GM13977 (cell line): ENCODE measurements at regions of chr1 and their contacts with region 1.

Region 1: DNA sequence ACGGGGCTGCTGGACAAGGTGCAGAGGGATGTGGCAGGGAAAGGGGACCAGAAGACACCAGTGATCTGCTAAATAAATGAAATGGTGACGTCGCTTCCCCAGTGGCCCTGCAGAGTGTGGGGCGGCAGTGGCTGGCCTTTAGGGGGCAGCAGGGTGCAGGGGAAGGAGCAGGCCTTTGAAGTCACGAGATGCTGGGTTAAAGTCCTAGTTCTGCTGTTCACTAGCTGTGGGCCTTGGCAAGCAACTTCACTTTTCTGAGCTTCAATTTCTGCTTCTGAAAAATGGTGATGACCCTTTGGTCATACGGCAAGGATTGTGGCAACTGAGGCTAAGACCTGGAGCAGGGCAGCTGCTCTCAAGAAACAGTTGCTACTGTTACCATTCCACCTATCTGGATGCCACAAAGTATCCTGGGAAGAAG is 9.2 kb upstream of the GALE start:
- DNase-seq: peak; percentile 84
- CTCF ChIP-seq: peak; percentile 98

Region 2: DNA sequence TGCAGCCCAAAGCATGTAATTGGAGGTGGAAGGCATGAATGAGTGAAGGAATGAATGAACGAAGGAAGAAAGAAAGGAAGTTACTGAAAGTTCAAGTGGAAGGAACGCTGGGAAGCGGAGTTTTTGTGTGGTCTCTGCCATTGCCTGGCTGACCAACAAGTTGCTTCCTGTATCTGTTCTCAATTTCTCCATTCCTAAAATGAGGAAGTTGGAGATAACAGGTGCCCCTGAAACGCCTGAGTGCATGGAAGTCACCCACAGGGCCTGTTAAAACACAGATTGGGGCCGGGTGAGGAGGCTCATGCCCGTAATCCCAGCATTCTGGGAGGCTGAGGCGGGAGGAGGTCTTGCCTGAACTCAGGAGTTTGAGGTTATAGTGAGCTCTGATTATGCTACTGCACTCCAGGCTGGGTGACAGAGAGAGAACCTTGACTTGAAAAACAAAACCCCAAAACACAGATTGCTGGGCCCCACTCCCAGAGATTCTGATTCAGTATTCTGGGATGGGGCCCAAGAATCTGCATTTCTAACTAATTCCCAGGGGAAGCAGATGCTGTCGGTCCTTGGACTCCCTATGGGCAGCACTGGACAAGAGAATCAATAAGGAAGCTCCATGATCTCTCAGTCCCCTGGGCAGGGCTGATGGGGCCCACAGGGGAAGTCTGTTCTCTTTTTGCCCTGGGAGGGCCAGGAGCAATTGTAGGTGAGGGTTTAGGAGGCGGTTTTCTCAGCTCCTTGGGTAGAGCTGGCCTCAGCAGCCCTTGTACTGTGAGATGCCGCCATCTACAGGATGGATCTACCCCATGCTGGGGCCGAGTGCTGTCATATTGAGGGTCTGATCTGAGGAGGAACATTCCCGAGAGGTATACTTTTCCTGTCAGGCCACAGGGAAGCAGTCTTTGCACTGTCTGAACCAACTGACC is 106.7 kb after region 1 on chr1:
- in situ Hi-C with region 1: loop called (anchors 5 kb)
- DNase-seq: peak; percentile 82
- CTCF ChIP-seq: peak; percentile 88

Region 3: DNA sequence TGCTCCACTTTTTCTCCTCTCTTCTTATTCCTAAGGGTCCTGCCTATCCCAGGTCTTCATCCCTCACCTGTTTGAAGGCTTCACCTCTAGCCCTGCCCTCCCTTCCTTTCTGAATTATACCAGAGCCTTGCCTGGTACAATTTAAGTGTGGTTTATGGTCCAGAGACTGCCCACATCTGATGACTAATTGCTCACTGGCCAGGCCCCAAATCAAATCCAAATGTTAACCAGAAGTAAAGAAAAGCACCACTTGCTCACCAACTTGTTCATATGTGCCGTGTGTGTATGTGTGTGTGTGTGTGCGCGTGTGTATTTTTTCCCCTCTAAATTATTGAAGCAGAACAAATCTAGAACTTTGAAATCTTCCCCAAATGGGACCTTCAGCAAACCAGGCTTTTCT is 275.8 kb after region 1 on chr1:
- in situ Hi-C with region 1: no loop called
- DNase-seq: no peak
- CTCF ChIP-seq: no peak